IMR-90 (cell line): ENCODE measurements at regions of chr18 and their contacts with region 1.

Region 1: DNA sequence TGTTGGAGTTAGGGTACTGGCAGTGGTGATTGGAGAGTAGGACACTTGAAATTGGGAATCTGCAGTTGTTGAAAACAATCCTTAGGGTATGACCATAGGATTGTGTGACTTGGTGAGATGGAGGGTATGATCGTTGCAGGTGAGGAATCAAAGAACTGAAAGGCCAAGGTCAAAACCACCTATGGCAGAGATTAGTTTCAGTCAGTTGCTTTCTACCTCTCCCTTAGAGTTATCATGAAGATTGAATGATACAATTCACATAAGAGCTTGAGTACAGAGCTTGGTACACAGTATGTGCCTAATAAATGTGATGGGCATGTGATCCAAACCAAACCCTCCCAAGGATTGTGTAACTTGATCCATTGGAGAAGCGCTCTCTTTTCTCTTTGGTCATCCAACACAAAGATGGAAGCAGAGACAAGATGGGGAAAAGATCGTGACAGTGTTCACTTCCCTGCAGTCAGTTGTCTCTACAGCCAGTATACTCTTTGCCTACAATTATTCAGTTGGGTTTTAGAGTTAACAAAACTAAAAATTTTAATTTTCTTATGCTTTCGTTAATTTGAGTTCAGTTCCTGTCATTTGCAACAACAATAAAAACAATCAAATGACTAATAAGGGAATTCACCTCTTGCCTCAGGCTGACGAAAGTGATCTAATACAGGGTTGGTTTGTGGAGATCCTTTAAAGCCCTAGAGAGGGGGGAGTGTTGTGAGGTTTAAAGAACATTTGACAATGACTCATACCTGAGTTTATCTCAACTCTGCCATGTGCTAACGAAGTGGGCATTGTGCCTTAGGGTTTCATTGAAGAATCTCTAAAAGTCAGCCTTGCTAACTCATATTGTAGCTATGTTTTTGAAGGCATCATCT is 14.7 kb upstream of the SMAD2 start:
- DNase-seq: peak; percentile 25
- ATAC-seq: no peak
- H3K4me3 ChIP-seq: no peak overlapping the region
- H3K27ac ChIP-seq: no peak overlapping the region
- H3K4me1 ChIP-seq: no peaks in the 10 kb centered on the region
- H3K27me3 ChIP-seq: peaks cover 3% of the 10 kb centered on the region; the same call in 1 of the 2 replicates
- CTCF ChIP-seq: no peak
- POLR2A ChIP-seq: no peak
- RAD21 ChIP-seq: no peak

Region 2: DNA sequence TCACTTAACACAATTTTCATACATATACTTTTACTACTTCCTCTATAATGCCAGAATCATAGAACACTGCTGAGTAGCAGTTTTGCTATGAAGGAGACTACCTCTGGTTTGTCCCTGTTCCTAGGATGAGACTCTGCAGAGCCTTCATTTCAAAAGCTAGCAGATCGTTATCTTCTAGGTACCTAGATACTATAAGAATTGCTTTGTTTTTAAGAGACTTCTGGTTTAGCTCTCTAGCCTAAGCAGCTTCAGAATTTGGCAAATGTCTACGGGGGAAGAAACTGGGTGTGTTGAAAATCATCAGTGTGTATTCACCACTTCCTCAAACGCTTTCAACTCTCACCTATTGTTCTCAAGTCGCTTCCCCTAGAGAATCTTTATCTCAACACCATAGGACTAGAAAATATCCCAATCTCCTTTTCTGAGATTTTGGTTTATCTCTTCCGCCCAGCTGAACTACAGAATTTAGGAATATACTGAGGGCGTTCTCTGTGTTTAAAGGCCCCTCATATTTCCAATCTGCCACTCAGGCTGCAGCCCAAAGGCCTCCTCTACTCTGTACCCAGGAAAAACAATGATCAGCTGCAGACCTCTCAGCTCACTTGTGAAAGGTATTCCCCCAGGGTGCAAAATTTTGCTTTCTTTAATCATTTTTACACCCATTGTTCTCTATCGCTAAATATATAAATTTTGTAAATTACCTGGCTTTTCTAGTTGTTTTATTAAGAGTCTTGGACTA is 43.4 kb before region 1 on chr18:
- CTCF ChIA-PET with region 1: no interaction called
- POLR2A ChIA-PET with region 1: no interaction called
- dilution Hi-C with region 1: no loop called
- in situ Hi-C with region 1: no loop called
- intact Hi-C with region 1: loop called (anchors 1 kb)
- DNase-seq: no peak
- ATAC-seq: no peak
- H3K4me3 ChIP-seq: no peak overlapping the region
- H3K27ac ChIP-seq: no peak overlapping the region
- H3K4me1 ChIP-seq: no peaks in the 10 kb centered on the region
- H3K27me3 ChIP-seq: no peaks in the 10 kb centered on the region
- CTCF ChIP-seq: no peak
- POLR2A ChIP-seq: no peak
- RAD21 ChIP-seq: no peak